ENCODE measurements at regions of chr19 and their contacts with region 1.

Region 1: DNA sequence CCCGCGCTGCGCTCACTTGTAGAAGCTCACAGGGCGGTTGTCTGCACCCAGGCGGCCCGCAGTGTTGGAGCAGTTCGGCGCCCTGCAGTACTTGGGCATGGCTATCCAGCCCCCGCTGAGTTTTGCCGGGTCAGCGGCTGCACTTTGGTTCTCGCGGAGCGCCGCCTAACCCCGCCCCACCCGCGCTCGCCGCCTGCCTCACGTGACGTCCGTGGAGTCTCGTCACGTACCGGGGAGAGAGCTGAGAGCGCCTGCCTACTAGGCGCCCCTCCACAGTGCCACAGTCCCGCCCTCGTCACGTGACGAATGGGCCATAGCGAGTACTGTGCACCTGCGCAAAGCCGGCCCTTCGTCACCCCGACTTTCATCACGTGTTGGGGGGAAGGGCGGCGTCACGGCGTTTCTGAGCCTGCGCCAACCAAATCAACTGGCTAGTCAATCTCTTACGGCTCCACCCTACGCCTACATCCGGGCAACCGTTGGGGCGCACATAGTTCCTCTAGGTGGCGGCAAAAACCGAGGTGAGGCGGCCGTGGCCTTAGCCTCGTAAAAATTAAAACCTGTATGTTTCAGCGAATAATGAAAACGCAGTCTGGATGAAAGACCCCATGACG is at the start of gene THAP8:
- DNase-seq: peak; percentile 100
- H3K4me3 Mint-ChIP-seq: peak within 1 kb of the TSS; percentile 96
- H3K27ac Mint-ChIP-seq: peak within 1 kb of the TSS; percentile 98
- H3K4me1 Mint-ChIP-seq: peaks cover 35% of the 10 kb centered on the region
- H3K27me3 Mint-ChIP-seq: no peaks in the 10 kb centered on the region
- total RNA-seq, gene THAP8: 1.5 and 2.0 TPM in 2 replicates

Region 2: GRCh38 chr19:35648017-35648961 is 405.9 kb before region 1 on chr19 and contains the start of gene COX6B1:
- intact Hi-C with region 1: loop called (anchors 1 kb)
- DNase-seq: peak; percentile 98
- H3K4me3 Mint-ChIP-seq: peak within 1 kb of the TSS; percentile 96
- H3K27ac Mint-ChIP-seq: peak within 1 kb of the TSS; percentile 88
- H3K4me1 Mint-ChIP-seq: peaks cover 31% of the 10 kb centered on the region
- H3K27me3 Mint-ChIP-seq: no peaks in the 10 kb centered on the region
- total RNA-seq, gene COX6B1: 451 and 472 TPM in 2 replicates

Region 3: GRCh38 chr19:35736913-35737886 is 317.0 kb before region 1 on chr19:
- intact Hi-C with region 1: no loop called
- DNase-seq: peak; percentile 75
- H3K4me3 Mint-ChIP-seq: no peak overlapping the region
- H3K27ac Mint-ChIP-seq: peak overlapping the region; percentile 56
- H3K4me1 Mint-ChIP-seq: peaks cover 35% of the 10 kb centered on the region
- H3K27me3 Mint-ChIP-seq: no peaks in the 10 kb centered on the region

Region 4: GRCh38 chr19:35959040-35959967 is 94.9 kb before region 1 on chr19:
- intact Hi-C with region 1: loop called (anchors 5 kb)
- DNase-seq: peak; percentile 93
- H3K4me3 Mint-ChIP-seq: peak overlapping the region; percentile 58
- H3K27ac Mint-ChIP-seq: no peak overlapping the region
- H3K4me1 Mint-ChIP-seq: peaks cover 16% of the 10 kb centered on the region
- H3K27me3 Mint-ChIP-seq: peaks cover 15% of the 10 kb centered on the region

Region 5: GRCh38 chr19:36014029-36014924 is 39.9 kb before region 1 on chr19 and contains the start of gene ALKBH6:
- intact Hi-C with region 1: loop called (anchors 1 kb)
- DNase-seq: peak; percentile 100
- H3K4me3 Mint-ChIP-seq: peak within 1 kb of the TSS; percentile 97
- H3K27ac Mint-ChIP-seq: peak within 1 kb of the TSS; percentile 95
- H3K4me1 Mint-ChIP-seq: peaks cover 37% of the 10 kb centered on the region
- H3K27me3 Mint-ChIP-seq: no peaks in the 10 kb centered on the region
- total RNA-seq, gene ALKBH6: 46.1 and 50.7 TPM in 2 replicates

Region 6: DNA sequence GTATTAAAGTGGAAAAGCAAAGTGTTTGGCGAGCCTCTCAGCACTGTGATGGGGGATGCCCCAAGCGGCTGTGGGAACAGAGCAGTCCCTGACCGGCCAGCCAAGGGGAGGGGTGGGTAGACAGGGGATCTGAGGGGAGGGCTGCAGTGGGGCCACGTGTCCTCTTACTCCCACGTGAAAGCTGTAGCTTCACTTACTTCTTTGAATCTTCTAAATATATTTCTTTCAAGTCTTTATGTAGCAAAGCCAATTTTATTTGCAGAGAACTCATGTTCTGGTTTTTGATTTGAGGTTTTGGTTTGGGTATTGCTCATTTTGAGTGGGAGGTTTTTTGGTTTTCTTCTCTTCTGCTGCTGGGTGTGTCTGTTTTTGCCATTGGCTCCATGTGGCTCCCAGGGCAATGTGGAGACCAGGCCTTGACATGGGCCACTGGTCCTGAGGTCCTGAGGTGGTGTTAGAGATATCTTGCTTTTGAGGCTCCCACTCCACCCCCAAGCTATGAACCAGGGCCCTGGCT is 39.0 kb after region 1 on chr19:
- intact Hi-C with region 1: no loop called
- DNase-seq: no peak
- H3K4me3 Mint-ChIP-seq: no peak overlapping the region
- H3K27ac Mint-ChIP-seq: peak overlapping the region; percentile 68
- H3K4me1 Mint-ChIP-seq: peaks cover 13% of the 10 kb centered on the region
- H3K27me3 Mint-ChIP-seq: no peaks in the 10 kb centered on the region

Region 7: DNA sequence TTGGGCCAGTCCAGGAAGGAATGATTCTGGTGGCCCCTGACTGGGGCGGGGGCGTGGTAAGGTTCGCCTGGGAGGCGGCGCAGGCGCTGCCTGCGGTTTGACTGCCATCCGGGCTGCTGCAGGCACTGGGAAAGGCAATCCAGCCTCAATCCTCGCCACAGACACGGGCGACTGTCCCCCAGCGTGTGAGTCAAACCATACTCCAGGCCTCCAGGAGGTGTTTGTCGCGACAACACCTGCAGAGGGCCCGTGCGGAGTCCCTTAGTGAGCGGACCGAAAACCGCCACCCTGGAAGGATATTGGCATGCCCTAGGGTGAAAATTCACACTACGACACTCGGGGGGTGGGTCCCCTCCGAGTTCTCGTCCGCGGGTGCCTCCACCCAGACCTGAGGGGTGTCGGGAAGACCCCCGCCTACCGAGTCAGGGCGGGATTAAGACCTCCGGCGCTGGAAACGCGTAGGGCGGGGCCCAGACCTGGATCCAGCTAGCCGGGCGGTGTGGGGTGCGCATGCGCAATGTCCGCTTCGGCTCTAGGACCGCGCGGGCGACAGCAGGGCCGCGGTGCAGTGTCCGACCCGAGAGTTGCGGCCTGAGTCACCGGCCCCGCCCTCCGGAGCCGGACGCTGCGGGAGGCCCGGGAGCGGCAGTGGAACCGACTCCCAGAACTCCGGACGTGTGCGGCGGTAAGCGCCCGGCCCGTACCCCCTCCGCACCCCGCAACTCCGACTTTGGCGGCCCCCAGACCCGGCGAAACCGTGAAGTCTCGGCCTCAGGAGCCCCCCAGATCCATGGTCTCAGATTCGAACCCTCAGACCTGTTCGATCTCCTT is 85.5 kb after region 1 on chr19 and contains the start of gene CAPNS1:
- intact Hi-C with region 1: loop called (anchors 1 kb)
- DNase-seq: peak; percentile 98
- H3K4me3 Mint-ChIP-seq: peak within 1 kb of the TSS; percentile 89
- H3K27ac Mint-ChIP-seq: peak within 1 kb of the TSS; percentile 95
- H3K4me1 Mint-ChIP-seq: peaks cover 23% of the 10 kb centered on the region
- H3K27me3 Mint-ChIP-seq: no peaks in the 10 kb centered on the region
- total RNA-seq, gene CAPNS1: 351 and 362 TPM in 2 replicates

Measured in activated CD4-positive, alpha-beta T cell treated with anti-CD3 and anti-CD28 coated beads, Interleukin-2, amount 10 ng/mL, durations not matched to agents 24 days and 14 days (primary cell).